Caco-2 (cell line): ENCODE measurements at regions of chr15 and their contacts with region 1.

Region 1: GRCh38 chr15:92881802-92882696 is 18.1 kb upstream of the CHD2 start:
- DNase-seq: peak; percentile 98 to 99
- H3K4me3 ChIP-seq: peak overlapping the region; percentile 33
- H3K4me3 Mint-ChIP-seq: peak overlapping the region; percentile 87
- H3K27ac Mint-ChIP-seq: peak overlapping the region; percentile 98
- H3K4me1 ChIP-seq: peaks cover 48% of the 10 kb centered on the region
- H3K4me1 Mint-ChIP-seq: peaks cover 37% of the 10 kb centered on the region
- H3K27me3 ChIP-seq: no peaks in the 10 kb centered on the region
- H3K27me3 Mint-ChIP-seq: no peaks in the 10 kb centered on the region
- CTCF ChIP-seq: no peak

Region 2: DNA sequence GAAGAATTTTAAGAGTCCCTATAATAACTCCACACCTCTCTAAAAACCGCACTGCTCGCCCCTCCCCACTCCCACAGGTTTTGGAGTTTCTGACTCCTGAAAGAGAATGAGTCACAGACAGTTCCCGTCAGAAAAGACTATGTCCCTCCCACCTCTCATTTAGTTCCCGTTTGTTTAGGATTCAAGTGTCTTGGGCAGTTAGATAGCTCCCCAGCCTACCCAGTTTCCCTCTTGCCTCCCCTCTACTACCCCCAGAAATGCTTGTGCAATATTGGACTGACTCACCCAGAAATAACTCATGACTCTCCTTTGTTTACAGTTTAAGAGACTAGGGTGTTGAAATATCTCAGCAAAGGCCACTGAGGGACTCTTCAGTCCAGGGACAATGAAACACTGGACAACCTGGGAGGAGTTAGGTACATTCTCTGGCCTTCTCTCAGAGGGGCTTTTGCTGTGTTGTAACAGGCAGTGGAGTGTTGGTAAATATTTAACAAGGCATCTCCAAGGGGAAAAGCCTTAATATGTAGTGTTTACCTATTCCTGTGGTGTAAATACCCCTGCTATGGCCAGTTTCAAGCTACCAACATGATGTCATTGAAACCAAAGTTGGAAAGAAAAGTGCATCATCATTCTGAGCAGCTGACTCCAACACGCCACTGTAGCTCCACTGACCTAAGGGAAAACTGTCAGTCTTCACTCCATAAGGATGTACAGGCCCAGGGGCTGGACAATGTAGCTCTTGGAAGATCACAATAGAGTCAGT is 78.0 kb before region 1 on chr15:
- CTCF ChIA-PET with region 1: interaction called, 18 read pairs
- POLR2A ChIA-PET with region 1: interaction called, 103 read pairs
- intact Hi-C with region 1: loop called (anchors 1 kb)
- DNase-seq: peak; percentile 89 to 92
- H3K4me3 ChIP-seq: no peak overlapping the region
- H3K4me3 Mint-ChIP-seq: peak overlapping the region; percentile 6
- H3K27ac Mint-ChIP-seq: peak overlapping the region; percentile 83
- H3K4me1 ChIP-seq: peaks cover 41% of the 10 kb centered on the region
- H3K4me1 Mint-ChIP-seq: peaks cover 16% of the 10 kb centered on the region
- H3K27me3 ChIP-seq: no peaks in the 10 kb centered on the region
- H3K27me3 Mint-ChIP-seq: no peaks in the 10 kb centered on the region
- CTCF ChIP-seq: no peak

Region 3: GRCh38 chr15:92820236-92821021 is 61.6 kb before region 1 on chr15:
- CTCF ChIA-PET with region 1: interaction called, 4 read pairs
- POLR2A ChIA-PET with region 1: interaction called, 48 read pairs
- intact Hi-C with region 1: loop called (anchors 1 kb)
- DNase-seq: peak; percentile 93 to 95
- H3K4me3 ChIP-seq: peak overlapping the region; percentile 17
- H3K4me3 Mint-ChIP-seq: peak overlapping the region; percentile 83
- H3K27ac Mint-ChIP-seq: peak overlapping the region; percentile 94
- H3K4me1 ChIP-seq: peaks cover 38% of the 10 kb centered on the region
- H3K4me1 Mint-ChIP-seq: peaks cover 33% of the 10 kb centered on the region
- H3K27me3 ChIP-seq: no peaks in the 10 kb centered on the region
- H3K27me3 Mint-ChIP-seq: no peaks in the 10 kb centered on the region
- CTCF ChIP-seq: no peak

Region 4: GRCh38 chr15:92868992-92869988 is 12.8 kb before region 1 on chr15:
- CTCF ChIA-PET with region 1: interaction called, 3 read pairs
- POLR2A ChIA-PET with region 1: interaction called, 14 read pairs
- intact Hi-C with region 1: no loop called
- DNase-seq: peak; percentile 39 to 45
- H3K4me3 ChIP-seq: no peak overlapping the region
- H3K4me3 Mint-ChIP-seq: no peak overlapping the region
- H3K27ac Mint-ChIP-seq: peak overlapping the region; percentile 69
- H3K4me1 ChIP-seq: peaks cover 30% of the 10 kb centered on the region
- H3K4me1 Mint-ChIP-seq: peaks cover 27% of the 10 kb centered on the region
- H3K27me3 ChIP-seq: no peaks in the 10 kb centered on the region
- H3K27me3 Mint-ChIP-seq: no peaks in the 10 kb centered on the region
- CTCF ChIP-seq: no peak

Region 5: DNA sequence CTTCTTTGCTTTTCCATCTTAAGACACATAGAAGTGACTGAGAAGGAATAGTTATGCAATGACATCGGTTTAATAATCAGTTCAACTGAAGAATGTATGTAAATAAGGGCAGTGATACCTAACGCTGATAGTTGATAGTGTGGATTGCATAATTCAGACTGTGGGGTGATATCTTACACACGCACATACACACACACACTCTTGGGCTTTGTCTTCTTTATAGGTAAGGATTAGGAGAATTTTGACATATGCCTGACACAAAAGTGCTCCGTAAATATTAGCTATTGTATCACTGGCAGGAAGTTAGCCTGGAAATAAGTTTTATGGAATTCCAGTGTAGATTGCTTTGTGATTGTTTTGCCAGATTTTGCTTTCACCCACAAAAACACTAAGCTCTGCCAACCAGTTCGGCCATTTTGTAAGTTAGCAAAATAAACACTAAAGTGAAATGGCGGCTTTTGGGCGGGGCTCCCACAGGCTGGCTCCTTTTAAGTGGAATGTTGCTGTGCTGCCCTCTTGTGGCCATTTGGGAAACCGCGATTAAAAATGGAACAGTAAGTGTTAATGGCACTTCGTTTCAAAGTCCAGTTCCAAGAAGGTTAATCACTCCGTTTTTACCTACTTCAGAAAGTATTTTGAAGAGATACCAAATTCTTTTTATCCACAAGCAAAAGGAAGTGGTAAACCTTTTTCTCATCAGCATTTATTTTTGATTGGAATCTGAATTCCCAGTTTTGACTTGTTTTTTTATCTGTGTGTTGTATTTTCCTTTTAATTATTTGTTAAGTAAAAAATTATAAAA is 35.8 kb after region 1 on chr15:
- CTCF ChIA-PET with region 1: interaction called, 3 read pairs
- POLR2A ChIA-PET with region 1: interaction called, 9 read pairs
- intact Hi-C with region 1: loop called (anchors 1 kb)
- DNase-seq: peak; percentile 92
- H3K4me3 ChIP-seq: peak overlapping the region; percentile 10; the same call in 1 of the 2 replicates
- H3K4me3 Mint-ChIP-seq: peak overlapping the region; percentile 78
- H3K27ac Mint-ChIP-seq: peak overlapping the region; percentile 88
- H3K4me1 ChIP-seq: peaks cover 72% of the 10 kb centered on the region
- H3K4me1 Mint-ChIP-seq: peaks cover 46% of the 10 kb centered on the region
- H3K27me3 ChIP-seq: no peaks in the 10 kb centered on the region
- H3K27me3 Mint-ChIP-seq: no peaks in the 10 kb centered on the region
- CTCF ChIP-seq: peak; percentile 64 to 78